ENCODE measurements at regions of chr9 and their contacts with region 1.

Region 1: GRCh38 chr9:6305954-6306563 is 22.1 kb upstream of the TPD52L3 start:
- DNase-seq: no peak
- ATAC-seq: peak; percentile 81 to 94 (median 90)
- H3K4me3 ChIP-seq: no peak overlapping the region
- H3K27ac ChIP-seq: no peak overlapping the region
- H3K4me1 ChIP-seq: no peaks in the 10 kb centered on the region
- H3K27me3 ChIP-seq: no peaks in the 10 kb centered on the region
- CTCF ChIP-seq: peak in 3 of 4 donors; percentile 34 to 52 (median 46)

Region 2: GRCh38 chr9:5899292-5899691 is 406.8 kb before region 1 on chr9:
- intact Hi-C with region 1: loop called in 1 of 3 experiments (anchors 10 kb)
- DNase-seq: no peak
- ATAC-seq: no peak
- H3K4me3 ChIP-seq: no peak overlapping the region
- H3K27ac ChIP-seq: no peak overlapping the region
- H3K4me1 ChIP-seq: no peaks in the 10 kb centered on the region
- H3K27me3 ChIP-seq: no peaks in the 10 kb centered on the region
- CTCF ChIP-seq: no peak

Region 3: DNA sequence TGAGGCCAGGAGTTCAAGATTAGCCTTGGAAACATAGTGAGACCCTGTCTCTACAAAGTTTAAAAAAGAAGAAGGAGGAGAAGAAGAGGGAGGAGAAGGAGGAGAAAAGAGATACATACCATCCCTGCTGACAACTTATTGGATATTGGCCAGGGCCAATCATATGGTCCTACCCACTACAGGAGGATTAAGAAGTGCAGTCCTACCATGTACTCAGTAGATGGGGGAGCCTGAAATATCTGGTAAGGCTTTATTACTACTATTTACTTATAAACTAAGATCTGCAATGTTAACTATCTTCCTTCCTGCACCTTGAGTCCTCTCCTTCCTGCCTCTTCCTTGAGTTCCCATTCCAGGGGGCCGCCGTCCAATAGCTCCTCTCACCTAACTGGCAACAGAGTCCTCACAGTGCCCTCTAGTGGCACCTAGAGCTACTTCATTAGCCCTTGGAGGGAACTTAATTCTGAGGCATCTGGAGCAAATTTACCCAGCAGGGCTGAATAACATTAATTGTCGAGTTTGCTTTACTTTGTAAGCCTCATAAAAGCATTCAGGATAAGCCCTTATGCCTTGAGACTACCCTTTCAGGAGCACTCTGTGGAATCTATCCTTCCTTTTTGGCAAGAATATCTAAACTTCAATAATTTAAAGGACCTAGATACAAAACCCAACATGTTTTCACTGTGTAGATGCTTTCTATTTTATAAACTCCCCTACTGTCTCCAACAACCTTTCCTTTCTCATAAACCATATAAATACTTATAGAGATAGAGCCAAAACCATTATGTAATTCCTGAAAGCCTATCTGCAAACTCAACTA is 251.6 kb before region 1 on chr9:
- intact Hi-C with region 1: loop called in 1 of 3 experiments (anchors 5 kb)
- DNase-seq: peak in 4 of 6 donors; percentile 53 to 76 (median 60)
- ATAC-seq: peak; percentile 91 to 97 (median 96)
- H3K4me3 ChIP-seq: no peak overlapping the region
- H3K27ac ChIP-seq: no peak overlapping the region
- H3K4me1 ChIP-seq: no peaks in the 10 kb centered on the region
- H3K27me3 ChIP-seq: no peaks in the 10 kb centered on the region
- CTCF ChIP-seq: peak; percentile 61 to 75 (median 73)

Region 4: GRCh38 chr9:6068983-6069382 is 237.1 kb before region 1 on chr9:
- intact Hi-C with region 1: loop called in 1 of 3 experiments (anchors 10 kb)
- DNase-seq: no peak
- ATAC-seq: peak in 3 of 4 donors; percentile 34 to 82 (median 80)
- H3K4me3 ChIP-seq: no peak overlapping the region
- H3K27ac ChIP-seq: no peak overlapping the region
- H3K4me1 ChIP-seq: no peaks in the 10 kb centered on the region
- H3K27me3 ChIP-seq: no peaks in the 10 kb centered on the region
- CTCF ChIP-seq: no peak

Region 5: GRCh38 chr9:6080154-6080716 is 225.8 kb before region 1 on chr9:
- intact Hi-C with region 1: no loop called
- DNase-seq: peak; percentile 84 to 95 (median 94)
- ATAC-seq: peak; percentile 97 to 99 (median 98)
- H3K4me3 ChIP-seq: peak overlapping the region in 3 of 4 donors; percentile 22 to 47 (median 40)
- H3K27ac ChIP-seq: peak overlapping the region in 3 of 4 donors; percentile 55 to 70 (median 65)
- H3K4me1 ChIP-seq: peaks cover 0 to 3% (median 0%) of the 10 kb centered on the region in 3 donors
- H3K27me3 ChIP-seq: no peaks in the 10 kb centered on the region
- CTCF ChIP-seq: no peak

Region 6: DNA sequence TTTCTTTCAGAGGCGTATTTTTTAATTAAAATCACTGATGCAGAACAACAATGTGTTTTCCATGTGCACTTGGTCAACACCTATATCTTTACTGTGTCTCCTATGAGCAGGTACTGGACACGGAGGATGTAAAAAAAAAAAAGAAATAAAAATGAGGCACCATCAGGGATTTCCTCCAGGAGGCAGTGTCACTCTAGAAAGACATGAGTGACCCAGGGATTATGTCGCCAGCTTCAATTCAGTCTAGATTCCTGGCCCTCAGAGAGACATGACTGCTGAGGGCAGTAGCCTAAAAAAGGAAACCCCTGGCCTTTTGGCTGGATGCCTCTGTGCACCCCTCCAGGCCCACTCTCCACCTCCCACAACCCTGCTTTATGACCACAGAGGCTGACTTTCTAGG is 108.7 kb before region 1 on chr9:
- intact Hi-C with region 1: loop called in 2 of 3 experiments (anchors 5 kb)
- DNase-seq: peak in 2 of 6 donors; percentile 13 to 38
- ATAC-seq: peak; percentile 86 to 97 (median 92)
- H3K4me3 ChIP-seq: no peak overlapping the region
- H3K27ac ChIP-seq: no peak overlapping the region
- H3K4me1 ChIP-seq: peaks cover 0 to 4% (median 0%) of the 10 kb centered on the region in 3 donors
- H3K27me3 ChIP-seq: no peaks in the 10 kb centered on the region
- CTCF ChIP-seq: peak in 3 of 4 donors; percentile 28 to 40 (median 39)

Region 7: GRCh38 chr9:6353851-6354686 is 48.0 kb after region 1 on chr9:
- intact Hi-C with region 1: no loop called
- DNase-seq: peak in 2 of 6 donors; percentile 3 to 21
- ATAC-seq: peak; percentile 74 to 93 (median 92)
- H3K4me3 ChIP-seq: no peak overlapping the region
- H3K27ac ChIP-seq: no peak overlapping the region
- H3K4me1 ChIP-seq: no peaks in the 10 kb centered on the region
- H3K27me3 ChIP-seq: no peaks in the 10 kb centered on the region
- CTCF ChIP-seq: peak; percentile 60 to 78 (median 72)